Caco-2 (cell line): ENCODE measurements at regions of chr13 and their contacts with region 1.

Region 1: GRCh38 chr13:72826446-72826845 is 44.5 kb downstream of the PIBF1 start:
- DNase-seq: no peak
- H3K4me3 ChIP-seq: no peak overlapping the region
- H3K4me3 Mint-ChIP-seq: no peak overlapping the region
- H3K27ac Mint-ChIP-seq: no peak overlapping the region
- H3K4me1 ChIP-seq: peaks cover 9% of the 10 kb centered on the region; the same call in 1 of the 2 replicates
- H3K4me1 Mint-ChIP-seq: no peaks in the 10 kb centered on the region
- H3K27me3 ChIP-seq: no peaks in the 10 kb centered on the region
- H3K27me3 Mint-ChIP-seq: no peaks in the 10 kb centered on the region
- CTCF ChIP-seq: no peak

Region 2: DNA sequence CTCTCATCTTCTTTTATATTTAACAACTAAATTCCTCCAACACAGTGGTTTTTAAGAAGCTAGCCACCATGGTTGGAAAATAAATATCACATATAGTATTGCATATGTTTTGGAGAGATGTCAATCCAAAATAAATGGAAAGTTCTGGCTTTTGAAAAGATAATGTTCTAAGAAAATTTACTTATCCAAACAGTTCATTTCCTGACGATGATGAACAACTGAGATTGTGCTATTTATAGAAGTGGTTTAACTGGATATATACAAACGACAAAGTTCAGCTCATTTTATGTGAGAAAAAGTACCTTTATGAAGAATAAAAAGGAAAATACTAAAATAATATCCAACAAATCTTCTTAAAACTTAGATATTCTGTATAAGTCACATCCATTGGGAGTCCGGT is 273.7 kb before region 1 on chr13:
- CTCF ChIA-PET with region 1: no interaction called
- POLR2A ChIA-PET with region 1: no interaction called
- intact Hi-C with region 1: no loop called
- DNase-seq: no peak
- H3K4me3 ChIP-seq: no peak overlapping the region
- H3K4me3 Mint-ChIP-seq: no peak overlapping the region
- H3K27ac Mint-ChIP-seq: no peak overlapping the region
- H3K4me1 ChIP-seq: no peaks in the 10 kb centered on the region
- H3K4me1 Mint-ChIP-seq: no peaks in the 10 kb centered on the region
- H3K27me3 ChIP-seq: no peaks in the 10 kb centered on the region
- H3K27me3 Mint-ChIP-seq: peaks cover 3% of the 10 kb centered on the region
- CTCF ChIP-seq: no peak

Region 3: DNA sequence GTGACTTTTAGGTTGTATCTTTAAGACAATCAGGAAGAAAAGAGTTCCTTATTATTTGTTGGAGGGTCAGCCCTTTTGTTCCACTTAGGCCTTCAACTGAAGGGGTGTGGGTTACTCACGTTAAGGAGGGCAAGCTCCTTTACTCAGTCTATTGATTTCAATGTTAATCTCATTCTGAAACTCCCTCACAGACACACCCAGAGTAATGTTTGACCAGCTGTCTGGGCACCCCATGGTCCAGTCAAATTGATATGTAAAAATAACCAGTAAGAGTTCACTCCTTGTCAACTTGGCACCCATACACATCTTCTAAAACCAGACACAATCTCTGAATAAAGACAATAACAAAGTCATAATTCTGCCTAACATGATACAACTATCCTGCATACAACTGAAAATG is 525.3 kb after region 1 on chr13:
- CTCF ChIA-PET with region 1: interaction called, 10 read pairs
- POLR2A ChIA-PET with region 1: no interaction called
- intact Hi-C with region 1: no loop called
- DNase-seq: no peak
- H3K4me3 ChIP-seq: no peak overlapping the region
- H3K4me3 Mint-ChIP-seq: no peak overlapping the region
- H3K27ac Mint-ChIP-seq: no peak overlapping the region
- H3K4me1 ChIP-seq: no peaks in the 10 kb centered on the region
- H3K4me1 Mint-ChIP-seq: no peaks in the 10 kb centered on the region
- H3K27me3 ChIP-seq: no peaks in the 10 kb centered on the region
- H3K27me3 Mint-ChIP-seq: no peaks in the 10 kb centered on the region
- CTCF ChIP-seq: no peak